ENCODE measurements at regions of chr3 and their contacts with region 1.

Region 1: GRCh38 chr3:24069045-24069444 is 124.0 kb downstream of the NR1D2 start:
- DNase-seq: no peak
- ATAC-seq: peak in 1 of 2 donors; percentile 22

Region 2: GRCh38 chr3:24012589-24013269 is 56.3 kb before region 1 on chr3:
- intact Hi-C with region 1: loop called in 1 of 2 experiments (anchors 10 kb)
- DNase-seq: no peak
- ATAC-seq: no peak

Region 3: DNA sequence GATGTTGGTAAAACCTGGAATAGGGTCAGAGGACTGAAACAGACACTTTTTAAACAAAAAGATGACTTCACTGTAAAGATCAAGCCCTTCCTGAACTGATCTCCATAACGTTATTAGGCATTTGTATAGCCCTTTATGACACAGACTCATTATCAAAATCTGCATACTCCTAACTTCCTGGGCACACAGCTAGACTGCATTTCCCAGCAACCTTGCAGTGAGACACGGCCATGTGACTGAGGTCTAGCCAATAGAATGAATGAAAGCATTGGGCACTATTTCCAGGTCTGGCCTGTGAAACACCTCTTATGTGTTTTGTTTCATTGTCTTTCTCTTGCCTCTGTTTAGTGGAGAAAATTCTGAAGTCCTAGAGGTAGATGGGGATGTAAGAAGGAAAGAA is 146.5 kb after region 1 on chr3:
- intact Hi-C with region 1: no loop called
- DNase-seq: no peak
- ATAC-seq: no peak

Region 4: GRCh38 chr3:24359645-24360462 is 290.8 kb after region 1 on chr3:
- intact Hi-C with region 1: no loop called
- DNase-seq: no peak
- ATAC-seq: no peak